Activated T-helper 1 cell treated with anti-CD3 and anti-CD28 coated beads, Interleukin-12 subunit alpha, Interleukin-12 subunit beta, Interleukin-2, Interleukin-4 antibody, amounts not matched to agents 30 ng/mL and 10 ng/mL and 1 ng/mL, durations not matched to agents 14 hours and 24 hours and 36 hours (primary cell): ENCODE measurements at regions of chr12 and their contacts with region 1.

Region 1: GRCh38 chr12:53625946-53626701 is at the start of gene ATF7:
- DNase-seq: peak; percentile 98
- H3K4me3 Mint-ChIP-seq: peak within 1 kb of the TSS; percentile 99
- H3K27ac Mint-ChIP-seq: peak within 1 kb of the TSS; percentile 89
- H3K4me1 Mint-ChIP-seq: peaks cover 36% of the 10 kb centered on the region
- H3K27me3 Mint-ChIP-seq: no peaks in the 10 kb centered on the region
- total RNA-seq, gene ATF7: 21.5 and 25.9 TPM in 2 replicates

Region 2: DNA sequence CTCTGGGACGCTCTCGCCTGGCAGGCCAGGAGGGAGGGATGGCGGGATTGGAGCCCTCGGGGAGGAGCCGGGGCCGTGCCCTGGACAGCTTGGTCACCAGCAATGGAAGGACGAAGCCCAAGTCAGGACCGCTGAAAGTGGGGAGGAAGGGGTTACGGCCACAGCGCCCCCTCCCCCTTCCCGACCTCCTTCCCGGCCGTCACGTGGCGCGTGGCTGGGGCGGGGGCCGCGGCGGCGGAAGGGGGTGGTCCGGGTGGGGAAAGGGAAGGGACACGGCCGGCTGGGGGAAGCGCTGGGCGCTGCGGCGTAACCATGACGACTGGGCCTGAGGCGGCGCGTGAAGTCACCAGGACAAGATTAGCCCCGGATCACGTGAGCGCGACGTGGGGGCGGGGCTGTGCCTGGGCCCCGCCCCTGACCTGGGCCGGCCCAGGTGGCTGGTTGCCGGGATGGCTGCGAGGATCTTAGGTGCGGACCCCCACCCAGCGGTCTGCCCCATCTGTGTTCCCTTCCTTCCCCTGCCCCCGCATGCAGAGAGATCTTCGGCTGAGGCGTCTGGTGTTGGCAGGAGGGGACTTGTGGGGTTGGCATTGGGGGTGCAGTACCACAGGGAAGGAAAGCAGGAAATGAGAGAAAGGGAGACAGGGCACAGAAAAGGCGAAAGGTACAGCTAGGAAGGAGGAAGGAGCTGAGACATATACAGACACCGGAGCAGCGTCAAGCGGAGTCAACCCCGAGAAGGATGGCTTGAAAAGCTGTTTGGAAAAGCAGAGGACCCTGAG is 133.1 kb before region 1 on chr12:
- intact Hi-C with region 1: loop called (anchors 2 kb)
- DNase-seq: peak; percentile 86
- H3K4me3 Mint-ChIP-seq: peak overlapping the region; percentile 86
- H3K27ac Mint-ChIP-seq: peak overlapping the region; percentile 41
- H3K4me1 Mint-ChIP-seq: peaks cover 37% of the 10 kb centered on the region
- H3K27me3 Mint-ChIP-seq: no peaks in the 10 kb centered on the region

Region 3: DNA sequence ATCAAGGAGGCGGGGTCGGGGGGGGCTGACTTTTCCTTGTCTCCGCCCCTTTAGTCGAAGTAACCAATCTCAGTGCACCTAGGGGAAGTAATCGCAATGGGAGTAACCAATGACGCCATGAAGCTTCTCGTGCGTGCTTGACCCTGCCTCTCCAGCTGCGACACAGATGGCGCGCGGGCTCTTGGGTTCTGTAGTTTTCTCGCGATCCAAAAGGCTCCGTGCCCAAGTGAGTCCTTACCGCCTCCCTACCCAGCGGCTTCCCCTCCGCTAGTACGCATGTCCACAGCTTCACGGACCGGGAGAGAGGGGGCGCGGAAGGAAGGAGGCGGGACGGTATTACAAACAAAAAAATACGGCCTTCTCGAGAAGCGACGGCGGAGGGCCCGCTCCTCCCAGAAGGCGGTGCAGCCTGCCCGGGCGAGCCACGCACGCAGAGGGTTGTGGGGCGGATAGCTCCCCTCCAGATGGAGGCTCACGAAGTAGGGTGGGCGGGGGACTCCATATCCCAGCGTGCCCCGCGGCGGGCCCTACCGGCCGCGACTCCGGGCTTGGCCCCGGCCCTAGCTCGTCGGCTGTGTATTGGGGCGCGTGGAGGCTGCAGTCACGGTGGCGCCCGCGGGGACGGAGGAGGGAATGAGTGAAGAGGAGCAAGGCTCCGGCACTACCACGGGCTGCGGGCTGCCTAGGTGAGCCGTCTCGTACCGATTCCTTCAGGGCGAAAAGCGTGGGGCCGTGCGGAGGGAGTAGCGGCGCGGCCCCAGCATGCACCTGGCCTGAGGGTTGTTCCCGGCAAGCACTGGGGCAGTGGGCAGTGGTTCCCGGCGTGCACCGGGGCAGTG is 125.1 kb before region 1 on chr12 and contains the start of gene TARBP2:
- intact Hi-C with region 1: loop called (anchors 1 kb)
- DNase-seq: peak; percentile 93
- H3K4me3 Mint-ChIP-seq: peak within 1 kb of the TSS; percentile 95
- H3K27ac Mint-ChIP-seq: peak within 1 kb of the TSS; percentile 98
- H3K4me1 Mint-ChIP-seq: peaks cover 53% of the 10 kb centered on the region
- H3K27me3 Mint-ChIP-seq: peaks cover 2% of the 10 kb centered on the region
- total RNA-seq, gene TARBP2: 47.7 and 48.2 TPM in 2 replicates

Region 4: DNA sequence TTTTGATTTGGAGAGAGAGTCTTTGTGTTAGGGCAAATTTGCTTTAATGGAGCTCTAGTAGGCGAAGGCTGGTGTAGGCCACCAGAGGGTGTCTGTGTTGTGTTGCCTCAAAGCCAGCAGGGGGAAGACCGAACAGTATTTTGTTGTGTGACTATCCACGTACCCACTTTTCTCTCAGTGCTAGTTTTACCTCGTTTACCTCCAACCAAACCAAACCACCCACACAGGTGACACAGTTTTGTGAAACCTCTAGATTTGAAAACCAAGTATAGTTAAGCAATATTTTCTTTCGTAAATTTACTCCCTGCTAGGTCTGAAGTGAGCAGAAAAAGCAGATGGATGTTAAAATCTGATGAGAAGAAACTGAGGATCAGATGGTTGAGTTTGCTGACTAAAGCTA is 82.6 kb before region 1 on chr12:
- intact Hi-C with region 1: loop called (anchors 1 kb)
- DNase-seq: peak; percentile 38
- H3K4me3 Mint-ChIP-seq: no peak overlapping the region
- H3K27ac Mint-ChIP-seq: peak overlapping the region; percentile 75
- H3K4me1 Mint-ChIP-seq: peaks cover 13% of the 10 kb centered on the region
- H3K27me3 Mint-ChIP-seq: no peaks in the 10 kb centered on the region

Region 5: GRCh38 chr12:53561590-53561953 is 64.6 kb before region 1 on chr12:
- intact Hi-C with region 1: loop called (anchors 1 kb)
- DNase-seq: no peak
- H3K4me3 Mint-ChIP-seq: no peak overlapping the region
- H3K27ac Mint-ChIP-seq: peak overlapping the region; percentile 73
- H3K4me1 Mint-ChIP-seq: peaks cover 41% of the 10 kb centered on the region
- H3K27me3 Mint-ChIP-seq: no peaks in the 10 kb centered on the region